Breast epithelium (tissue), 4 donors: ENCODE measurements at regions of chr1 and their contacts with region 1.

Region 1: GRCh38 chr1:166933633-166934032 is 41.7 kb downstream of the ILDR2 start:
- DNase-seq: no peak
- H3K4me3 ChIP-seq: no peak overlapping the region
- H3K27ac ChIP-seq: no peak overlapping the region
- H3K4me1 ChIP-seq: no peaks in the 10 kb centered on the region
- H3K27me3 ChIP-seq: no peaks in the 10 kb centered on the region
- CTCF ChIP-seq: no peak
- POLR2A ChIP-seq: no peak

Region 2: GRCh38 chr1:166910396-166910994 is 23.1 kb before region 1 on chr1:
- intact Hi-C with region 1: no loop called
- DNase-seq: peak in 1 of 2 donors; percentile 70
- H3K4me3 ChIP-seq: no peak overlapping the region
- H3K27ac ChIP-seq: no peak overlapping the region
- H3K4me1 ChIP-seq: no peaks in the 10 kb centered on the region
- H3K27me3 ChIP-seq: no peaks in the 10 kb centered on the region
- CTCF ChIP-seq: peak; percentile 17 to 70 (median 48)
- POLR2A ChIP-seq: no peak

Region 3: GRCh38 chr1:166969074-166969677 is 35.5 kb after region 1 on chr1:
- intact Hi-C with region 1: loop called (anchors 5 kb)
- DNase-seq: no peak
- H3K4me3 ChIP-seq: no peak overlapping the region
- H3K27ac ChIP-seq: no peak overlapping the region
- H3K4me1 ChIP-seq: no peaks in the 10 kb centered on the region
- H3K27me3 ChIP-seq: peaks cover 0 to 19% of the 10 kb centered on the region in 2 donors
- CTCF ChIP-seq: no peak
- POLR2A ChIP-seq: no peak

Region 4: DNA sequence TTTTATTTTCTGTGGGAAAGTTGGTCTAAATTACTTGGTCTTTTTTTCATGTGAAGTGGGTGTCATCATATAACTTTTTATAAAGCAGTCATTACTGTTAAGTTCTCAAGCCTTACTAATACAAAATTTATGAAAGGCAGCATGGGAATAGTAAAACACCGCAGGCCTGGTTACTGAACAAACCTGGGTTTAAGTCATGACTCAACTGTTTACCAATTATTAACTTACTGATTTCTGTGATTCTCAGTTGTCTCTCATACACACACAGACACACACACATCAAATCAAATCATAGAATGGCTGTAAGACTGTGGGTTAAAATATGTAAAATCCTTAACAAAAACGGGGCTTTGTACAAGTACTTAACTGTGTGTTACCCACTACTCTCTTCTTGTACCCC is 70.1 kb after region 1 on chr1:
- intact Hi-C with region 1: no loop called
- DNase-seq: no peak
- H3K4me3 ChIP-seq: no peak overlapping the region
- H3K27ac ChIP-seq: no peak overlapping the region
- H3K4me1 ChIP-seq: no peaks in the 10 kb centered on the region
- H3K27me3 ChIP-seq: no peaks in the 10 kb centered on the region
- CTCF ChIP-seq: no peak
- POLR2A ChIP-seq: no peak